Kidney (tissue), 22 donors: ENCODE measurements at regions of chr2 and their contacts with region 1.

Region 1: DNA sequence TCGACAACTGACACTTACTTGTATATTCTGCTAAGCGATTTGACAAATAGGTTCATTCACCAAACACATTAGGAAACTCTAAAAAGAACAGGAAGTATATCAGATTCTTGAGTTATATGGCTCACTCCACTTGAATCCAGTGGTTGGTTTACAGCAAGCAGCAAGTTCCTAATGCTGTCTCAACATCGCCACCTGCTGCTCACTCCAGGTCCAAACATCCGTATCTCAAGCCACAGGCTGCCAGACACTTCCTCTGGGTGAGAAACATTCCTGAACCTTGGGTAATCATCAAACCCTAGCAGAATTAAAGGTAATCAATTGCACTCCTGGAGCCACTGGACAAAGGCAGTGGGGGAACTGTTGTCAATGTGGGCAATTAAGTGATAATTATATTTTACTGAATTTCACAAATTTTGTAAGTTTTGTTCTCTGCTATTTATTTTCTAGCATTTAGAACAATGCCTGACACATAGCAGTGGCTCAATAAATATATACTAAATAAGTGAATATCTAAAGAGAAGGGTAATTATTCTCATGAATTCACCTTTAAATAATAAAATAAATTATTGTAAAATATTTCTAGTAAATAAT is 107.1 kb upstream of the TTN start:
- DNase-seq: peak; percentile 72 to 88 (median 81)
- H3K4me3 ChIP-seq: no peak overlapping the region
- H3K27ac ChIP-seq: no peak overlapping the region
- H3K4me1 ChIP-seq: no peaks in the 10 kb centered on the region
- H3K27me3 ChIP-seq: no peaks in the 10 kb centered on the region
- CTCF ChIP-seq: peak; percentile 80

Region 2: DNA sequence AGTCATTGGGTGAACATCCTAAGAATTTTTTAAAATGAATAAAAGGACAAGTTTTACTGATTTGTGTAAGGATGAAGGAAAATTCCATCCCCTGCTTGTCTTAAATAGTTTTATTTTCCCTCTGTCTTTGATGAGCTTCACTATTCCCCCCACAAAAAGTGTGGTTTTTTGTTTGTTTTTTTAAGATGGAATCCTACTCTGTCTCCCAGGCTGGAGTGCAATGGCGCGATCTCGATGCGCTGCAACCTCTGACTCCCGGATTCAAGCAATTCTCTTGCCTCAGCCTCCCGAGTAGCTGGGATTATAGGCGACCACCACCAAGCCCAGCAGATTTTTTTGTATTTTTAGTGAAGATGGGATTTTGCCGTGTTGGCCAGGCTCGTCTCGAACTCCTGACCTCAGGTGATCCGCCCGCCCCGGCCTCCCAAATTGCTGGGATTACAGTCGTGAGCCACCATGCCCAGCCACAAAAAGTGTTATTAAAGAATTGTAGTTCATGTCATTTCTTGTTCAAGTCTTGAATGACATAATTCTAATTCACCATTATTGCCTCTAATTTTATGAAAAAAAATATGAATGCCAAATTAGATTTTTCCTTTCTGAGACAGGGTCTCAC is 1430.1 kb before region 1 on chr2:
- intact Hi-C with region 1: no loop called
- DNase-seq: no peak
- H3K4me3 ChIP-seq: no peak overlapping the region
- H3K27ac ChIP-seq: no peak overlapping the region
- H3K4me1 ChIP-seq: no peaks in the 10 kb centered on the region
- H3K27me3 ChIP-seq: no peaks in the 10 kb centered on the region
- CTCF ChIP-seq: no peak

Region 3: DNA sequence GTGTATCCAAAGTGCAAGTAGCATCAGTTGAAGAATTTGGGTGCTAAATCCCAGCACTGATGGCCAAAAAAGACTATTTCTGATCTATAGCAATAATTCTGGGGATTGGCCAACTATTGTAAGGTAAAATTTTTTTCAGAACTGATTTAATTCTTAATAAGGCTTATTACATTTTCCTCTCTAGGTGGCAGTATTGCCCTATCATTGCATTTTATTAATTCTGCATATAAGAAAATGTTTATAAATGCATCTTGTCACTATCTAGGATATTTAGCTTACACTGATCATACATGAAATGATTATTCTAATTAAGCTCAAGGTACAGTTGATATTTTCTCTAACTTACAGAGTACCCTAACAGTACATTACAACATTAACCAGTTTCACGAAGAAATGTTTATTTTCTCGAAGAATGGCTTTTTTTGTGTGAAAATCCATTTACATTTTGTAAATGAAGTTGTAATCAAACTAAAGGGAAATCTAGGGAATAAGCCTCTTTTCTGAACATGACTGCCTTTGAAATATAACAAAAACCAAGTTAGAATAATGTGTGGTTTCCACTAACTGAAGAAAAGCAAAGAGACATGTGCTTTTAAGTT is 118.2 kb before region 1 on chr2:
- intact Hi-C with region 1: loop called (anchors 10 kb)
- DNase-seq: peak in 2 of 5 donors; percentile 33 to 55
- H3K4me3 ChIP-seq: no peak overlapping the region
- H3K27ac ChIP-seq: no peak overlapping the region
- H3K4me1 ChIP-seq: no peaks in the 10 kb centered on the region
- H3K27me3 ChIP-seq: no peaks in the 10 kb centered on the region
- CTCF ChIP-seq: peak; percentile 28

Region 4: DNA sequence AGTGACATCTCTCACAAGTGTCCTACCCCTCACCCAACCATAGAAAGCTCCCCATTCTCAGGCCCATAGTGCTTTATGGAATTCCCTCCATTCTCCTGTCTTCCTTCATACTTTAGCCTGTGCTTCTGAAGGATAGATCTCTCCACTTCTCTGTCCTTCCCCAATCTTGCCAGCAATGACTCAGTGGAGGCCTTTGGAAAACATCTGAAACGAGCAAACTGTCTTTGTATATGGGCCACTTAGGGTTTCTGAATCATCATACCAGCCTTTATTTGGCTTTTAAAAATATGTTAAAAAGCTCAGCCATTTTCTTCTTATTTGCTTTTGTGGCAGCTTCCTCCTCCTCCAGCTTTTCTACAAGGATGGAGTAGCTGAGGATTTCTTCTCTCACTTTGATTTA is 1012.7 kb after region 1 on chr2:
- intact Hi-C with region 1: no loop called
- DNase-seq: no peak
- H3K4me3 ChIP-seq: no peak overlapping the region
- H3K27ac ChIP-seq: no peak overlapping the region
- H3K4me1 ChIP-seq: no peaks in the 10 kb centered on the region
- H3K27me3 ChIP-seq: no peaks in the 10 kb centered on the region
- CTCF ChIP-seq: no peak